Right lobe of liver (tissue), 6 donors: ENCODE measurements at regions of chr4 and their contacts with region 1.

Region 1: DNA sequence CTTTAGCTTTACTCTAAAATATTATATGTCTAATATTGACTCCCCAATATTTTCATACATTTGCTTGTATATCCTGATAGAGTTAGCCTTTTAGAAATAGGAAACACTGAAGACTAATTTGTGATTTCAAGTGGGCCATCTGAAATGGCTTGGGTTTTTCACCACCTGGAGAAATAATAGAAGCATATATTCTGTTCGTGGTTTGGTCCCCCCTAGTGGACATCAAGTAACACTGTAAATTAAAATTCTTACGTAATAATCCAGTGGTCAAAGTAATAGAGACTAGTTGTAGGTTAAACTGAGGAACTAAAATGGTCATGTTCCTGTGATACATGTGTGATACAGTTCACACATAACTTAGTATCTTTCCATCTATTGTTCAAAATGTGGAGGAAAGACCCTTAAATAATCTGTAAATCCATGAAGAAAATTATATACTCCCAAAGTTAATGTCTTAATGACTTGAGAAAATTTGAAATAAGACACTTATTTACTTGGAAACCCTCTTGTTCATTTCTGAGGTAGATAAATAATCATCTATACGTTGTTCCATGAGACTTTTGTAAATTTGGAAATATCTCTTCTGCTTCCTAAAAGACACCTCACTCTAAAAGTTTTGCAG is 79.8 kb upstream of the SMARCAD1 start:
- DNase-seq: no peak
- ATAC-seq: peak; percentile 63 to 83 (median 78)
- H3K4me3 ChIP-seq: no peak overlapping the region
- H3K27ac ChIP-seq: no peak overlapping the region
- H3K4me1 ChIP-seq: no peaks in the 10 kb centered on the region
- H3K27me3 ChIP-seq: no peaks in the 10 kb centered on the region
- CTCF ChIP-seq: peak; percentile 58 to 74 (median 68)
- POLR2A ChIP-seq: no peak

Region 2: DNA sequence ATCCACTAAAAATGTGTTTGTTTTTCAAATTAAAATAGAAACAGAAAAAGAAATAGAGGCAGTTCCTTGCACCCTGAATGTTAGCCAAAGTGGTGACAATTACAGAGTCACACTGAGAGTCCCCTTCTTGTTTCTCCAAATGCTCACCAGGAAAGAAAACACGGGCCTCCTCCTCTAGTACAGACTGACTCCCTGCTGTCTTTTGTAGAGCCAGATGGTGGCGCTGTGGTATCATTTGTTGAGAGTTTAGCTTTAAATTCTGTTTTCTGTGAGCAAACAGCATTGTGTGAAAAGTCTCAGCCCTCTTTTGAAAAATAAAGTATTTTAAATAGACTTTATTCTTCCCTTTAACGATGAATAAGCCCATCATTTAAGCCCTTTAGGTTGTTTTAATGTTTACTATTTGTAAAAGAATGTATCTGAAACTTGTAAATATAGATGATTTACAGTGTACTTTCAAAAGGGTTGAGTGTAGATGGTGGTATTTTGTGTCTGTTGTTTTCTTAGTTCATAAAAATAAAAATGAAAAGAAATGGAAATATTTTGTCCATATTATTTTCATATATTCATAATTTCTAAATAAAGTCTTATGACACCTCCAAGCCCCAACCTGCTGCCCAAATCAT is 336.1 kb before region 1 on chr4:
- intact Hi-C with region 1: loop called in 1 of 2 experiments (anchors 10 kb)
- DNase-seq: peak in 2 of 3 donors; percentile 32 to 46
- ATAC-seq: peak; percentile 74 to 88 (median 83)
- H3K4me3 ChIP-seq: no peak overlapping the region
- H3K27ac ChIP-seq: no peak overlapping the region
- H3K4me1 ChIP-seq: no peaks in the 10 kb centered on the region
- H3K27me3 ChIP-seq: no peaks in the 10 kb centered on the region
- CTCF ChIP-seq: peak; percentile 63 to 81 (median 77)
- POLR2A ChIP-seq: no peak

Region 3: DNA sequence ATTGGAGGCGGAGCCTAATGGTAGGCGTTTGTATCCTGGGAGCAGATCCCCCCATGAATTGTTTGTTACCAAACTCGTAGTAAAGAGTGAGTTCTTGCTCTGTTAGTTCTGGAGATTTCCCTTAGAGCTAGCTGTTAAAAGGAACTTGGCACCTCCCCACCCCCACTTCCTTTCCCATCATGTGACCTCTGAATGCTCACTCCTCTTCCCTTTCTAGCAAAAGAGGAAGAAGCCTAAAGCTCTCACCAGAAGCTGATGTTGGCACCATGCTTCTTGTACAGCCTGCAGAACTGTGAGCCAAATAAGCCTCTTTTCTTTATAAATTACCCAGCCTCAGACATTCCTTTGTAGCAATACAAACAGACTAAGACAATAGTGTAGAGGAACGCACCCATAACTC is 313.1 kb before region 1 on chr4:
- intact Hi-C with region 1: loop called in 1 of 2 experiments (anchors 10 kb)
- DNase-seq: no peak
- ATAC-seq: peak in 2 of 4 donors; percentile 50 to 52
- H3K4me3 ChIP-seq: no peak overlapping the region
- H3K27ac ChIP-seq: no peak overlapping the region
- H3K4me1 ChIP-seq: no peaks in the 10 kb centered on the region
- H3K27me3 ChIP-seq: no peaks in the 10 kb centered on the region
- CTCF ChIP-seq: no peak
- POLR2A ChIP-seq: no peak